Prostate gland (tissue), 2 donors: ENCODE measurements at regions of chr1 and their contacts with region 1.

Region 1: GRCh38 chr1:47333922-47334764 is 553 bp downstream of the CMPK1 start:
- DNase-seq: peak; percentile 78
- H3K4me3 ChIP-seq: peak overlapping the region; percentile 87 to 98
- H3K27ac ChIP-seq: peak overlapping the region; percentile 96 to 97
- H3K4me1 ChIP-seq: no peaks in the 10 kb centered on the region
- H3K27me3 ChIP-seq: no peaks in the 10 kb centered on the region
- CTCF ChIP-seq: peak in 3 of 4 experiments; percentile 31 to 56 (median 48)
- POLR2A ChIP-seq: peak; percentile 15

Region 2: GRCh38 chr1:47201179-47201578 is 133.0 kb before region 1 on chr1:
- intact Hi-C with region 1: no loop called
- DNase-seq: no peak
- H3K4me3 ChIP-seq: no peak overlapping the region
- H3K27ac ChIP-seq: no peak overlapping the region
- H3K4me1 ChIP-seq: no peaks in the 10 kb centered on the region
- H3K27me3 ChIP-seq: no peaks in the 10 kb centered on the region
- CTCF ChIP-seq: no peak
- POLR2A ChIP-seq: no peak

Region 3: GRCh38 chr1:47313915-47314664 is 20.1 kb before region 1 on chr1 and contains the start of gene STIL:
- intact Hi-C with region 1: loop called (anchors 1 kb)
- DNase-seq: peak; percentile 99
- H3K4me3 ChIP-seq: peak within 1 kb of the TSS; percentile 44 to 63
- H3K27ac ChIP-seq: peak within 1 kb of the TSS; percentile 72 to 88
- H3K4me1 ChIP-seq: no peaks in the 10 kb centered on the region
- H3K27me3 ChIP-seq: no peaks in the 10 kb centered on the region
- CTCF ChIP-seq: peak in 2 of 4 experiments; percentile 19 to 44
- POLR2A ChIP-seq: no peak
- total RNA-seq, gene STIL: 1.5 to 5.9 TPM

Region 4: DNA sequence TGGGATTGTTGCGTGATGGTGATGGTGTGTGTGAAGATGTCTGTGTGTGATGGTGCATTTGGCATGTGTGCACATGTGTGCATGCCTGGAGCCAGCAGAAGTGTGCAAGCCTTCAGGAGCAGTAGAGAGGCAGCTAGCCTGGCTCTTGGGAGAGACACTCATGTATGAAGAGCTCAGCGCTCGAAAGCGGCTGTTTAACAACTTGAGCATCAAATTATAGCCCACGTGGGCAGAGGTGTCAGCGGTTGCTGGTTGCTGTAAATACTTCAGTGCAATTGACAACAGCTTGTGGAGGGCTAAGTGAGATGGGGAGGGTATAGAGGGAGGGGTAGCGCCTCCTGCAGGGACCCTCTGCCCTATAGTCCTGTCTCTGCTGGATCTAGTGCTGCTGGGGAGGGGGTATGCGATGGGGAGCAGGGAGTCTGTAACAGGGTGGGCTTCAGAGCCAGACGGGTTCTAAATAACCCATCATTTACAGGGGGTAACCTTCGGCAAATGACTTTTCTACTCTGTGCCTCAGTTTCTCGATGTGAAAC is 125.2 kb after region 1 on chr1:
- intact Hi-C with region 1: no loop called
- DNase-seq: no peak
- H3K4me3 ChIP-seq: no peak overlapping the region
- H3K27ac ChIP-seq: no peak overlapping the region
- H3K4me1 ChIP-seq: no peaks in the 10 kb centered on the region
- H3K27me3 ChIP-seq: no peaks in the 10 kb centered on the region
- CTCF ChIP-seq: no peak
- POLR2A ChIP-seq: no peak